ENCODE measurements at regions of chr16 and their contacts with region 1.

Region 1: GRCh38 chr16:67428146-67428731 is 2.7 kb upstream of the HSD11B2 start:
- DNase-seq: no peak
- H3K4me3 ChIP-seq: no peak overlapping the region
- CTCF ChIP-seq: peak; percentile 92

Region 2: GRCh38 chr16:67406111-67406890 is 21.9 kb before region 1 on chr16:
- CTCF ChIA-PET with region 1: interaction called, 43 read pairs
- POLR2A ChIA-PET with region 1: no interaction called
- DNase-seq: peak; percentile 47
- H3K4me3 ChIP-seq: no peak overlapping the region
- CTCF ChIP-seq: no peak

Region 3: GRCh38 chr16:67438824-67439460 is 10.7 kb after region 1 on chr16:
- CTCF ChIA-PET with region 1: interaction called, 75 read pairs
- POLR2A ChIA-PET with region 1: no interaction called
- DNase-seq: no peak
- H3K4me3 ChIP-seq: no peak overlapping the region
- CTCF ChIP-seq: no peak

Region 4: GRCh38 chr16:67456391-67457081 is 28.3 kb after region 1 on chr16:
- CTCF ChIA-PET with region 1: interaction called, 154 read pairs
- POLR2A ChIA-PET with region 1: no interaction called
- DNase-seq: no peak
- H3K4me3 ChIP-seq: no peak overlapping the region
- CTCF ChIP-seq: peak; percentile 21

Region 5: GRCh38 chr16:67470359-67470758 is 42.1 kb after region 1 on chr16:
- CTCF ChIA-PET with region 1: interaction called, 154 read pairs
- POLR2A ChIA-PET with region 1: no interaction called
- DNase-seq: no peak
- H3K4me3 ChIP-seq: no peak overlapping the region
- CTCF ChIP-seq: no peak

Region 6: DNA sequence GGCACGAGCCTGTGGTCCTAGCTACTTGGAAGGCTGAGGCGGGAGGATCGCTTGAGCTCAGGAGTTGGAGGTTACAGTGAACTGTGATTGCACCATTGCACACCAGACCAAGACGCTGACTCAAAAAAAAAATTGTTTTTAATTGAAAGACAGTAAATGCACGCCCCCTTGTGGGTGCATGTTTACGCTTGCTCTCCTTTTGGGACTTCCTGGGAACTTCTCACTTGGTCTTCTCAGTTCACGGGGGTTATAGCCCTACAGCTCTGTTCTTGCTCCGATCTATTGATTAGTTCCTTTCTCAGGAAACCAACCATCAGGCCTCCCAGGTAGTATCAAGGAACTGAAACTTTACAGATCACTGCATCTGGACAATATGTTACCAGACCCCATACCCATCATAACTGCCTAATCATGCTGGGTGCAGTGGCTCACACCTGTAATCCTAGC is 86.2 kb after region 1 on chr16:
- CTCF ChIA-PET with region 1: interaction called, 14 read pairs
- POLR2A ChIA-PET with region 1: no interaction called
- DNase-seq: peak; percentile 42
- H3K4me3 ChIP-seq: no peak overlapping the region
- CTCF ChIP-seq: peak; percentile 56

Region 7: DNA sequence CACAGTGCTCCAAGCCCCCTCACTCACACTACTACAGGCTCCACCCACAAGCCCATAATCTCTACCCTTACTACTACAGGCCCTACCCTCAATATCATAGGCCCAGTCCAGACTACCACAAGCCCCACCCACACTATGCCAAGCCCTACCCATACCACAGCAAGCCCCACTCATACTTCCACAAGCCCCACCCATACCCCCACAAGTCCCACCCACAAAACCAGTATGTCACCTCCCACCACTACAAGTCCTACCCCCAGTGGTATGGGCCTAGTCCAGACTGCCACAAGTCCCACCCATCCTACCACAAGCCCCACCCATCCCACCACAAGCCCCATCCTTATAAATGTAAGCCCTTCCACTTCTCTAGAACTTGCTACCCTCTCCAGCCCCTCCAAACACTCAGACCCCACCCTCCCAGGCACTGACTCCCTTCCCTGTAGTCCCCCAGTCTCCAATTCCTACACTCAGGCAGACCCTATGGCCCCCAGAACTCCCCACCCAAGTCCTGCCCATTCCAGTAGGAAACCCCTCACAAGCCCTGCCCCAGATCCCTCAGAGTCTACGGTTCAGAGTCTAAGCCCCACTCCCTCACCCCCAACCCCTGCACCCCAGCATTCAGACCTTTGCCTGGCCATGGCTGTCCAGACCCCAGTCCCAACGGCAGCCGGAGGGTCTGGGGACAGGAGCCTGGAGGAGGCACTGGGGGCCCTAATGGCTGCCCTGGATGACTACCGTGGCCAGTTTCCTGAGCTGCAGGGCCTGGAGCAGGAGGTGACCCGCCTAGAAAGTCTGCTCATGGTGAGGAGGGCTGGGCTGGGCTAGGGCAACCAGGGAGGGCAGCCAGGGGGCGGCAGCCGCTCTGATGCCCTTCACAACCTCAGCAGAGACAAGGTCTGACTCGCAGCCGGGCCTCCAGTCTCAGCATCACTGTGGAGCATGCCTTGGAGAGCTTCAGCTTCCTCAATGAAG is 114.5 kb after region 1 on chr16:
- CTCF ChIA-PET with region 1: no interaction called
- POLR2A ChIA-PET with region 1: no interaction called
- DNase-seq: no peak
- H3K4me3 ChIP-seq: no peak overlapping the region
- CTCF ChIP-seq: no peak

Region 8: DNA sequence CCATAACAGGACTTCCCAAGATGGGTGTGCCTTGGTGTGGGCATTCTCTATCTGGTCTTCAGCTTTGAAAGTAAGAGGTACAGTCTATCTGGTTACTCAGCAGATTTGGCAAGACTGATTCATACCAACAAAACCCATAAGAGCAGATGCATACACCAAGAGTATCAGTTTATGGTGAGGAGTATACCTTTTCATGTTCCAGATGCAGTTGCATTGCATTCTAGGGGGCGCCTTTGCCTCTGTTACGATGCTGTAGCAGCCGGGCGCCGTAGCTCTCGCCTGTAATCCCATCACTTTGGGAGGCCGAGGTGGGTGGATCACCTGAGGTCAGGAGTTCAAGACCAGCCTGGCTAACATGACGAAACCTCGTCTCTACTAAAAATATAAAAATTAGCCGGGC is 185.6 kb after region 1 on chr16:
- CTCF ChIA-PET with region 1: no interaction called
- POLR2A ChIA-PET with region 1: no interaction called
- DNase-seq: no peak
- H3K4me3 ChIP-seq: no peak overlapping the region
- CTCF ChIP-seq: no peak

Measured in AG04449 (cell line).